Esophagus muscularis mucosa (tissue), 4 donors: ENCODE measurements at regions of chr1 and their contacts with region 1.

Region 1: DNA sequence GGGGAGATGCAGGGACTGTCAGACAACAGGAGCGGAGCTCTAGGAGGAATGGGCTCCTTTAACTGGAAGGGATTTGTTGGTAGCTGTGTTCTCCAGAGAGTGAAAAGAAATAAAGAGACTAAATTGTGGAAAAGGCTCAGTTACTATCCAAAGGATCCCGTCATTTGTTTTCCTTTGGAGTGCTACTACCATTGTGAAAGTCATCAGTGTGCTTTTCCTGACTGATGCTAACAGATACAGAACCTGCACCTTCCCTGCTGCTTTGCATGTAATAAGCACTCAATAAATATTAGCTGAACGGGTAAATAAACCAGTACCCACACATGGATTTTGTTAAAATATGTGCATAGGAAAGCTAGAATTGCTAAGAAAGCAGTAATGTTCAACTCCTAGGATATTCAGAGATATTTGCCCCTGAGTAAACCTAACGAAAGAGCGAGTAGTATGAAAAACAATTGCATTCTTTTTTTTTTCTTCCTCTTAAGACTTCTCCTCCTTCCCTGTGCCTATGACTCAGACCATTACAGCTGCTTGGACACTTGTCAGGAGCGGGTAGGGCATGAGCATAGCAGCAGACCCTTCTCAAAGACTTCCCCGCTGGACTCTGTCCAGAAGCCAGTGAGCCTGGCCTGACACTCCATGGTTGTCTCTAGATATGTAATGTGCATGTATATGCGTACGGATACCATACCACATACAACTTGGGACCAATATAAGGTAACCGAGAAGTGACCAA is 41.7 kb downstream of the PTGFRN start:
- DNase-seq: peak; percentile 83
- H3K4me3 ChIP-seq: peak overlapping the region; percentile 17 to 39 (median 37)
- H3K27ac ChIP-seq: peak overlapping the region; percentile 81 to 88 (median 84)
- H3K4me1 ChIP-seq: peaks cover 36 to 97% (median 84%) of the 10 kb centered on the region in 4 donors
- H3K27me3 ChIP-seq: no peaks in the 10 kb centered on the region
- CTCF ChIP-seq: no peak
- EP300 ChIP-seq: no peak
- POLR2A ChIP-seq: no peak

Region 2: GRCh38 chr1:116915182-116915661 is 36.1 kb before region 1 on chr1:
- intact Hi-C with region 1: loop called (anchors 2 kb)
- DNase-seq: no peak
- H3K4me3 ChIP-seq: peak overlapping the region; percentile 21 to 44 (median 36)
- H3K27ac ChIP-seq: peak overlapping the region; percentile 94 to 96 (median 96)
- H3K4me1 ChIP-seq: peaks cover 34 to 95% (median 92%) of the 10 kb centered on the region in 4 donors
- H3K27me3 ChIP-seq: no peaks in the 10 kb centered on the region
- CTCF ChIP-seq: no peak
- EP300 ChIP-seq: no peak
- POLR2A ChIP-seq: no peak

Region 3: DNA sequence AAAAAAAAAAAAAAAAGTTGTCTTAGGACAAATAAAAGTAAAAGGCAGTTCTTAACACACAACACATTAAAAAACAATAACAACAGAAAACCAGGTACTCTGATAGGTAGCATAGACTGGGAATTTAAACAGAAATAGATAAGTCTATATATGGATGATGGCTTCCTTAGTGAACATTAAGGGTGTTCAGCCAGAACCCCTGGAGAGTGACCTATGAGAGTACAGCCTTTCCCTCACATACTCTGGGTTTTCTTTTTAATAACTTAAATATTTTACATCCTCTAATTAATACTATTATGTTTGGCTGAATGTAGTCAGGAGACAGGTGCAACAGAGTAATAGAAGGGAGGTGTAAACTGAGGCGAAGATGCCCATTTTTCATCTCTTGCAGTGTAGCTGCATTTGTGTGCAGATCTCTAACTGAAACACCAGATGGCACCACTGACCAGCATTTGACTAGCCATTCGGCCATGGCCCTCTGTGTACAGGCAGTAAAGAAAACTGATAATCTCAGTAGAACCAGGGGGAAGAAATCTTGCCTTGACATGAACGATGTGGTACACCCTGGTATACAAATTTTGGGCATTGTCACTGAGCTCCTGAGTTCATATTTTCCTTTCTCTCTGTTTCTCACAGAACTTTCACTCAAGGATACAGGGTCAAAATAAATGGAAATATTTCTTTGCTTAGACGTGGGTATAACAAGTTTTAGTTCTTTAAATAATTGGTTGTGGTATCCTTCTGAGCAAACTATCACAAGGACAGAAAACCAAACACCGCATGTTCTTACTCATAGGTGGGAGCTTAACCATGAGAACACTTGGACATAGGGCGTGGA is 116.4 kb after region 1 on chr1:
- intact Hi-C with region 1: no loop called
- DNase-seq: no peak
- H3K4me3 ChIP-seq: no peak overlapping the region
- H3K27ac ChIP-seq: no peak overlapping the region
- H3K4me1 ChIP-seq: no peaks in the 10 kb centered on the region
- H3K27me3 ChIP-seq: no peaks in the 10 kb centered on the region
- CTCF ChIP-seq: peak; percentile 79 to 82 (median 79)
- EP300 ChIP-seq: no peak
- POLR2A ChIP-seq: no peak